Cardiac septum (tissue), 1 donor: ENCODE measurements at regions of chr17 and their contacts with region 1.

Region 1: GRCh38 chr17:37650419-37651003 is 7.3 kb upstream of the DDX52 start:
- DNase-seq: no peak

Region 2: DNA sequence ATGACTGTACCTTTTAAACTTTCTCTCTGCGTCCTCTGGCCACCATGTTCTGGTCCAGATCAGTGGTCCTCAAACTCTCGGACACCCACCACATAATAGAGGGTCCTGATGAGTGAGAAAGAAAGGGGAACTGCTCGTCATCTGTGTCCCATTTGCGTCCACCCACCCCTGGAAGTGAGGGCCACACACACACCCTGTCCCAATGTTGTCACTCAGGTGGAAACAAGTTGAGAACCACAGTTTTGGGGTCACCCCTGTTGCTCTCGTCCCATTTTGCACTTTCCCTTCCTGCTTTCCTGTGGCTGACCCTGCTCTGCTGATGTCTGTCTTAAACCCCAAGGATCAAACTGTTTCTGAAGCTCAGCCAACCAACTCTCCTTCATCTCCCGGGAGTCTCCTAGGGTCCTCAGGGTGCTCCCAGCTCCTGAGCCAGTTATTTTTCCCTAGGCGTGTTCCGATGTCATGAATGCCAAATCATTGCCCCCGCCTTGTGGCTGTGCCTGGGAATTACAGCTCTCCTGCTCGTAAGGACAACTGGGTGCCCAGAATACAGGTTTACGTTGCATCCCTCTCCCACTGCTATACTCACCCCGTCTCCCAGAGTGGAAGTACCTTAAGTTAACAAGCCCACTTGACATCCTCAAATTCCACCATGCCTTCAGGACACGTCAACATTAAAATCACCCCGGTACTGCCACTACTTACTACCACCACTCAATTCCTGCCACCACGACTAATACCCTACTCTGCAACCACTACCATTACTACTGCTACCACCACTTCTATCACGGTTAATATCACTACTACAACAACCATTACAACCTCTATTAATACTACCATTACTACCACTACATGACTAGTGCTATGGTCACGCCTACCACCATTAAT is 120.4 kb after region 1 on chr17:
- intact Hi-C with region 1: loop called (anchors 10 kb)
- DNase-seq: no peak

Region 3: DNA sequence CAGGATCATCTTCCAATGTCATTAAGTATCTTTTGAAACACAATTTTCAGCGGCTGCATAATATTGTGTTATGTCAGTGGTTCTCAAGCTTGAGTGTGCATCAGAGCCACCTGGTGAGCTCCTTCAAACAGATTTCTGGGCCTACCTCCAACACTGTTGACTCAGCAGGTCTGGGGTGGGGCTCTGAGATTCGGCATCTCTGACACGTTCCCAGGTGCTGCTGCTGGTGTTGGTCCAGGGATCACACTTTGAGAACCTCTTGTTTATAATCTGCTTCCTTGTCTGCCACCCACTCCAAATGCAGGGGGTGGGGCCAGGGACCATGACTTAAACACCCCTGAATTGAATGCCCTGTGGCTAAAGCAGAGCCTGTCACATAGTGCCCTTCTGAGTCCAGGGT is 168.2 kb after region 1 on chr17:
- intact Hi-C with region 1: loop called (anchors 5 kb)
- DNase-seq: no peak